ENCODE measurements at regions of chr17 and their contacts with region 1.

Region 1: DNA sequence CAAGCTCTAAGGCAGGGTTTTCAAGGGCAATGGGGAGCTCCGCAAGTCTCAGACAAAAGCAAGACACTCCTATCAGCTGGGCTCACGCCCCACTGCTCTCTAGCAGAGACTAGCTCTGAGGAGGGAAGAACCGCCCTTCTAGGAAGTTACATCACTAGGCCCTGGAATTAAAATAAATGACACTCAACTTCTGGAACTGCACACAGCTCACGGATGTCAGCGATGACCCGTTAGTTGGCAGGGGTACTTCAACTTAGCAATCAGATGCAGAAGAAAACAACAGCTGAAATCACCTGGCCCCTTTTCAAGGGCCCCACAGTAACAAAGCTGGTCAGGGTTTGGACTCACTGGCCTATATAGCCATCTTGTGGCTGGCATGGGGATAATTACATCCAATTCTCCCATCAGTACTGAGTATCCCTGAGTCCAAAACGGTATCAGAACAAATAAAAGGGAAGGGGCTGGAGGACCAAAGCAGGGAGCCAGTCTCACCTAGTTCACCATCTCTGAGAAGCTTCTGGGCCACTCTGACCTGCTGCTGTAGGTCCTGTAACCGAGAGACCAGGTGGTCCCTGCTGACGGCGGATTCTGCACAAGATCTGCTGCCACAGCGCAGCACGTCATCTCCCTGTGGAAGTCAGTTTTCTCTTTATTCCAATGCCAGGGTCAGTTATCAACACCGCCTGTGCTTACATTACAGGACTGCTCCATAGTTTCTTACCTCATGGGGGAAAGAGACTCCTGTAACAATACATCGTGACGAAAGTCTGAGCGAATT is 22.2 kb downstream of the SERPINF1 start:
- DNase-seq: peak in 3 of 4 donors; percentile 83 to 96 (median 90)
- ATAC-seq: peak; percentile 78
- H3K4me3 ChIP-seq: no peak overlapping the region
- H3K27ac ChIP-seq: peak overlapping the region; percentile 91 to 97
- H3K4me1 ChIP-seq: peaks cover 44 to 78% of the 10 kb centered on the region in 2 donors
- H3K27me3 ChIP-seq: no peaks in the 10 kb centered on the region
- CTCF ChIP-seq: peak; percentile 56 to 67

Region 2: GRCh38 chr17:1275962-1276736 is 507.9 kb before region 1 on chr17:
- intact Hi-C with region 1: no loop called
- DNase-seq: peak in 3 of 4 donors; percentile 52 to 86 (median 64)
- ATAC-seq: peak; percentile 85
- H3K4me3 ChIP-seq: no peak overlapping the region
- H3K27ac ChIP-seq: no peak overlapping the region
- H3K4me1 ChIP-seq: no peaks in the 10 kb centered on the region
- H3K27me3 ChIP-seq: peaks cover 10 to 76% of the 10 kb centered on the region in 2 donors
- CTCF ChIP-seq: peak; percentile 74 to 77

Region 3: GRCh38 chr17:1661045-1661444 is 123.0 kb before region 1 on chr17:
- intact Hi-C with region 1: loop called in 1 of 2 experiments (anchors 10 kb)
- DNase-seq: peak in 1 of 4 donors; percentile 20
- ATAC-seq: no peak
- H3K4me3 ChIP-seq: no peak overlapping the region
- H3K27ac ChIP-seq: no peak overlapping the region
- H3K4me1 ChIP-seq: peaks cover 0 to 11% of the 10 kb centered on the region in 2 donors
- H3K27me3 ChIP-seq: no peaks in the 10 kb centered on the region
- CTCF ChIP-seq: no peak

Region 4: DNA sequence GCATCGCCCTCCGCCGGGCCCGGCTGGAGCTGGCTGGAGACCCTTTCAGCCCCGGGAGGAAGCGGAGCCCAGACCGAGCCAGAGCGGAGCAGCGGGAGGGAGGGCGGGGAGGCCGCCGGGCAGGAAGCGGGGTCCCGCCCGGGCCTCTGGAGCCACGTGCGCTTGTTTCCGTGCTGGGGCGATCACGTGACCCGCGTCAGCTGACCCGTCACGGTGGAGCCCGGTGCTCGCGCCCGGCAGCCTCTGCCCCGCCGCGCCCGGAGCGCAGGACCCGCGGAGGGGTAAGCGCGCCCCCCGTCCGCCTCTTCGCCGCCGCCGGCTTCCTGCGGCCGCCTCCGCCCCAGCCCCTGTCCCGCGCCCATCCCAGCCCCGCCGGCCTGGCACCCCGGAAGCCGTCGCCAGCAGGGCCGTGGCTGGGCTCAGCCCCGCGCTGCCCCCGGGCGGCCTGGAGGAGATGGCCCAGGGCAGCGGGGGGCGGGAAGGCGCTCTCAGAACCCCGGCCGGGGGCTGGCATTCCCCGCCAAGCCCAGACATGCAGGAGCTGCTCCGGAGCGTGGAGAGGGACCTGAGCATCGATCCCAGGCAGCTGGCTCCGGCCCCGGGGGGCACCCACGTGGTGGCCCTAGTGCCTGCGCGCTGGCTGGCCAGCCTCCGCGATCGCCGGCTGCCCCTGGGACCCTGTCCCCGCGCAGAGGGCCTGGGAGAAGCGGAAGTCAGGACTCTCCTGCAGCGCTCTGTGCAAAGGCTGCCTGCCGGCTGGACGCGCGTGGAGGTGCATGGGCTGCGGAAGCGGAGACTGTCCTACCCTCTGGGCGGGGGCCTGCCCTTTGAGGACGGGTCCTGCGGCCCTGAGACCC is 59.3 kb before region 1 on chr17 and contains the start of gene WDR81:
- intact Hi-C with region 1: loop called in 1 of 2 experiments (anchors 10 kb)
- DNase-seq: peak; percentile 82 to 99 (median 93)
- ATAC-seq: peak; percentile 85
- H3K4me3 ChIP-seq: peak within 1 kb of the TSS; percentile 67 to 94
- H3K27ac ChIP-seq: peak within 1 kb of the TSS; percentile 85 to 88
- H3K4me1 ChIP-seq: peaks cover 16 to 90% of the 10 kb centered on the region in 2 donors
- H3K27me3 ChIP-seq: no peaks in the 10 kb centered on the region
- CTCF ChIP-seq: no peak
- polyA plus RNA-seq, gene WDR81: 9.3 to 13.5 (median 11.0) TPM

Region 5: GRCh38 chr17:1829592-1830257 is 45.7 kb after region 1 on chr17 and contains the starts of genes RPA1 and SMYD4:
- intact Hi-C with region 1: no loop called
- DNase-seq: peak; percentile 86 to 97 (median 90)
- ATAC-seq: peak; percentile 100
- H3K4me3 ChIP-seq: peak within 1 kb of the TSS; percentile 71 to 93
- H3K27ac ChIP-seq: peak within 1 kb of the TSS; percentile 60 to 76
- H3K4me1 ChIP-seq: peaks cover 0 to 41% of the 10 kb centered on the region in 2 donors
- H3K27me3 ChIP-seq: no peaks in the 10 kb centered on the region
- CTCF ChIP-seq: no peak
- polyA plus RNA-seq, gene RPA1: 107 to 150 (median 130) TPM
- polyA plus RNA-seq, gene SMYD4: 17.1 to 24.7 (median 22.7) TPM

Measured in left lung (tissue), 14 donors.